ENCODE measurements at regions of chr21 and their contacts with region 1.

Region 1: GRCh38 chr21:15820852-15821379 is 91.1 kb downstream of the USP25 start:
- DNase-seq: no peak
- H3K4me3 ChIP-seq: no peak overlapping the region
- H3K27ac ChIP-seq: no peak overlapping the region
- H3K4me1 ChIP-seq: no peaks in the 10 kb centered on the region
- CTCF ChIP-seq: no peak

Region 2: DNA sequence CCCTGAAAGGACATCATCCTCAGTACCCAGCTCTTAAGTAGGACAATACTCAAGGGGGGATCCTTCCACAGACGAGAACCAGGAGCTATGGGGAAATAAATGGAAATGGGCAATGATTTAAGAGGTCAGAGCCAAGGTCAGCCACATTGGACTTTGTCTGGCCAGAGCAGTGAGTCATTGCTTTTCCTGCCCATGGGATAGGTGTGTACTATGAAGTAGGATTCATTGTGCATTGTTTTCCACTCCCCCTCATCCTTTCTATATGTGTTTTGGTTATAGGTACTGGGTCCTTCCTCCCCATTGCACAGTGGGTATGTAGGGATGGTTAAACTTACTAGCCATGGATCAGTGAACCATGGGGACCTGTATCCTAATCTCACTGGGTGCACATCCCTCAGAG is 420.0 kb before region 1 on chr21:
- CTCF ChIA-PET with region 1: no interaction called
- POLR2A ChIA-PET with region 1: no interaction called
- intact Hi-C with region 1: no loop called
- DNase-seq: no peak
- H3K4me3 ChIP-seq: no peak overlapping the region
- H3K27ac ChIP-seq: no peak overlapping the region
- H3K4me1 ChIP-seq: no peaks in the 10 kb centered on the region
- CTCF ChIP-seq: no peak

Region 3: GRCh38 chr21:15831497-15831896 is 10.6 kb after region 1 on chr21:
- CTCF ChIA-PET with region 1: no interaction called
- POLR2A ChIA-PET with region 1: interaction called, 11 read pairs
- intact Hi-C with region 1: no loop called
- DNase-seq: no peak
- H3K4me3 ChIP-seq: no peak overlapping the region
- H3K27ac ChIP-seq: no peak overlapping the region
- H3K4me1 ChIP-seq: no peaks in the 10 kb centered on the region
- CTCF ChIP-seq: no peak

Region 4: GRCh38 chr21:15872236-15872635 is 51.3 kb after region 1 on chr21:
- CTCF ChIA-PET with region 1: no interaction called
- POLR2A ChIA-PET with region 1: interaction called, 10 read pairs
- intact Hi-C with region 1: no loop called
- DNase-seq: no peak
- H3K4me3 ChIP-seq: no peak overlapping the region
- H3K27ac ChIP-seq: no peak overlapping the region
- H3K4me1 ChIP-seq: peaks cover 16% of the 10 kb centered on the region
- CTCF ChIP-seq: no peak

Measured in OCI-LY7 (cell line).